Panc1 (cell line): ENCODE measurements at regions of chr12 and their contacts with region 1.

Region 1: DNA sequence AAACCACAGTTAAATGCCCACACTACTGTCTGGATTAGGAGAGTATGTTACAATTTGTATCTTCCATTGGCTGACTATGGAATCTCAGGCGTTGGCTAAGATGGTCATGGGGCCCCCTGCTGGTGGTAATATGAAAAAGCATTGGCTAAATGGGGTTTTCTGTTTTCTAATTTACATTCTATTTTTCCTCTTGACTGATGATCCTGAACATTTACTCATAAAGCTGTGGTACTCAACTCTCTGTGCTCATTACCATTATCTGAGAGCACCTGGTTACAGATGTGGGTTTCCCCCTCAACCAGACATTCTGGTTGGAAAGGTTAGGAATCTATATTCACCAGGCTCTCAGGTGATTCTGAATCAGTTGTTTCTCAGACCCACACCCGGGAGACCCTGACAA is 64.8 kb downstream of the WSCD2 start:
- DNase-seq: no peak
- ATAC-seq: 0 out of 2 replicates have a peak, but pooled peaks have one; percentile 45
- H3K4me3 ChIP-seq: no peak overlapping the region
- H3K27ac ChIP-seq: no peak overlapping the region
- H3K4me1 ChIP-seq: no peaks in the 10 kb centered on the region
- H3K27me3 ChIP-seq: no peaks in the 10 kb centered on the region
- CTCF ChIP-seq: peak; percentile 80

Region 2: DNA sequence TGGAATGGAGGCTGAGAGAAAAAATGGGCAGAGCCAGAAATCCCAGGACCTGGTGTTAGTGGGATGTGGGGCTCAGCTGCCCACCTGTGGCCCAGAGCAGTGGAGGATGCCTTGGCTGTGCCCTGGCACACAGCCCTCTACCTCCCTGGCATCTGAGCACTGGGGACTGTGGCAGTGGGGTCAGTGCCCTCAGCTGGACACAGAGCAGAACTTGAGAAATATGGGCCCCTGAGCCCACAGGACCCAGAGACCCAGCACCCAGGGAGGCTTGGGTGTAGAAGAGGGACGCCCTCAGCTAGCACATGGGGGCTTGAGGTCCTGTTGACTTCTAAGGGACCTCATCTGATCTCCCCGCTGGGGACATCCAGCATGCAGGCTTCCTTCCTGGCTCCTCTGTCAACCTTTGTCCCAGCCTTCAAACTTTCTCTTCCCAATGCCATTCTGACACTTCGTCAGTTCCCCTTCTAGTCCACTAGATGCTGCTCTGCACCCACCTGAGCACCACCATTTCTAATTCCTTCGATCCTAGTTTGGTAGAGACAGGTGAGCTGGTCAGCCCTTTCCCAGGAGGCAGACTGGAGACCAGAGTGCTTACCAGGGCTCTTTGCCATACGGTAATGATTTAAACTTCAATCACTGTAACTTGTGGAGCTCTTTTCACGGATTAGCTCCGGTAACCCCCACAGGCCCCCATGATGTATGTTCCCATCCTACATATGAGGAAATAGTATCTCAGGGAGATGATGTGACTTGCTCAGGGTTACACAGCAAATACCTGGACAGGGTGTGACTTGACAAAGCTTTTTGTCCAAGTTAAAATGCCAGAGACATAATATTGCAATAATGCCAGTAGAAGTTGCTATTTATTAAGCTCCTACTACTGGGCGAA is 275.8 kb before region 1 on chr12:
- CTCF ChIA-PET with region 1: no interaction called
- POLR2A ChIA-PET with region 1: no interaction called
- in situ Hi-C with region 1: no loop called
- intact Hi-C with region 1: loop called (anchors 5 kb)
- DNase-seq: no peak
- ATAC-seq: peak; percentile 92
- H3K4me3 ChIP-seq: no peak overlapping the region
- H3K27ac ChIP-seq: no peak overlapping the region
- H3K4me1 ChIP-seq: no peaks in the 10 kb centered on the region
- H3K27me3 ChIP-seq: peaks cover 2% of the 10 kb centered on the region; the same call in 1 of the 2 replicates
- CTCF ChIP-seq: peak; percentile 89

Region 3: GRCh38 chr12:107984970-107985369 is 208.9 kb before region 1 on chr12:
- CTCF ChIA-PET with region 1: no interaction called
- POLR2A ChIA-PET with region 1: no interaction called
- in situ Hi-C with region 1: no loop called
- intact Hi-C with region 1: loop called (anchors 5 kb)
- DNase-seq: no peak
- ATAC-seq: no peak
- H3K4me3 ChIP-seq: no peak overlapping the region
- H3K27ac ChIP-seq: no peak overlapping the region
- H3K4me1 ChIP-seq: no peaks in the 10 kb centered on the region
- H3K27me3 ChIP-seq: peaks cover 2% of the 10 kb centered on the region
- CTCF ChIP-seq: no peak

Region 4: DNA sequence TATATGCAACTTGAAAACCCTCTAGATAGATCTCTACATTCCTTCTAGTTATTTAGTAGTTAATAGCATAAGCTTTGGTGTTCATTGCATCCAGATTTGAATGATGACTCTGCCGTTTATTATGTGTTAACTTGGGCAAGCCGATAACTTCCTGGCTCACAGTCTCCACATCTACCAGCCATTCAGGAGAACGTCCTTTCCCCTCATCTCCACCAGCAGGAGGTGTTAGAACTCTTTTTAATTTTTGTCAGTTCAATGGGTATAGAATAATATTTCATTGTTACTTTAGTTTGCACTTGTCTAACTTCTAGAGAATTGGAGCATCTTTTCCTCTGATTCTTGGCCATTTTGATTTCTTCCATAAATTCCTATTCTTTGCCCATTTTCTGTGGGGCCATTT is 94.8 kb before region 1 on chr12:
- CTCF ChIA-PET with region 1: no interaction called
- POLR2A ChIA-PET with region 1: no interaction called
- in situ Hi-C with region 1: no loop called
- intact Hi-C with region 1: loop called (anchors 1 kb)
- DNase-seq: no peak
- ATAC-seq: no peak
- H3K4me3 ChIP-seq: no peak overlapping the region
- H3K27ac ChIP-seq: no peak overlapping the region
- H3K4me1 ChIP-seq: no peaks in the 10 kb centered on the region
- H3K27me3 ChIP-seq: peaks cover 9% of the 10 kb centered on the region; the same call in 1 of the 2 replicates
- CTCF ChIP-seq: peak; percentile 34

Region 5: DNA sequence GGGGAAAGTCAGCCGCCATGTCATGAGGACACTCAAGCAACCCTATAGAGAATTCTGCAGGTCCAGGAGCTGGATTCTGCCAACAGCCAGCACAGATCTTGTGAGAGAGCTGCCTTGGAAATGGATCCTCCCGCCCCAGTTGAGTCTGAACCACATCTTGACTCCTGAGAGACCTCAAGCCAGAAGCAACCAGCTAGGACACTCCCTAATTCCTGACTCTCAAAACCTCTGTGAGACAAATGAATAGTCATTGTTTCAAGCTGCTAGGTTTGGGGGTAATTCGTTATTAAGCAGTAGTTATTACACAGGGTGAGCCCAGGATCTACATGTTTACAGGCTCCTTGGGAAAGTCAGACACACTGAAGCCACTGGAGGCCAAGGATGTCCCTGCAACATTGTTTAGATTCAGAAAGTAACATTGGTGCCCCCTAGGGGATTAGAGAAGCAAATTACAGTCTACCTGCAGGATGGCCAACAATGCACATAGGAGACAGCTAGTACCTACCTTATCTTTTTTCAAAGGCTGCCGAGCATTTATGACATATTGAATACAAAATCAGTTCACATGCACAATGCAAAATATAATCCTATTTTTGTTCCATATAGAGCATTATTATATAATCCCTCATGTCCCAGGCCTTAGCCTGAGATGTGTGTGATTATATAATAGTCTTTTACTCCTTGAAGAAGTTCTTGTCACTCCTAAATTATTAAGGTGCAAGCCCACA is 263.3 kb after region 1 on chr12:
- CTCF ChIA-PET with region 1: no interaction called
- POLR2A ChIA-PET with region 1: no interaction called
- in situ Hi-C with region 1: no loop called
- intact Hi-C with region 1: loop called (anchors 10 kb)
- DNase-seq: peak; percentile 7
- ATAC-seq: peak; percentile 92
- H3K4me3 ChIP-seq: no peak overlapping the region
- H3K27ac ChIP-seq: no peak overlapping the region
- H3K4me1 ChIP-seq: no peaks in the 10 kb centered on the region
- H3K27me3 ChIP-seq: peaks cover 13% of the 10 kb centered on the region
- CTCF ChIP-seq: peak; percentile 82